Activated T-helper 1 cell treated with anti-CD3 and anti-CD28 coated beads, Interleukin-12 subunit alpha, Interleukin-12 subunit beta, Interleukin-2, Interleukin-4 antibody, amounts not matched to agents 30 ng/mL and 10 ng/mL and 1 ng/mL, durations not matched to agents 14 hours and 24 hours and 36 hours (primary cell): ENCODE measurements at regions of chr17 and their contacts with region 1.

Region 1: DNA sequence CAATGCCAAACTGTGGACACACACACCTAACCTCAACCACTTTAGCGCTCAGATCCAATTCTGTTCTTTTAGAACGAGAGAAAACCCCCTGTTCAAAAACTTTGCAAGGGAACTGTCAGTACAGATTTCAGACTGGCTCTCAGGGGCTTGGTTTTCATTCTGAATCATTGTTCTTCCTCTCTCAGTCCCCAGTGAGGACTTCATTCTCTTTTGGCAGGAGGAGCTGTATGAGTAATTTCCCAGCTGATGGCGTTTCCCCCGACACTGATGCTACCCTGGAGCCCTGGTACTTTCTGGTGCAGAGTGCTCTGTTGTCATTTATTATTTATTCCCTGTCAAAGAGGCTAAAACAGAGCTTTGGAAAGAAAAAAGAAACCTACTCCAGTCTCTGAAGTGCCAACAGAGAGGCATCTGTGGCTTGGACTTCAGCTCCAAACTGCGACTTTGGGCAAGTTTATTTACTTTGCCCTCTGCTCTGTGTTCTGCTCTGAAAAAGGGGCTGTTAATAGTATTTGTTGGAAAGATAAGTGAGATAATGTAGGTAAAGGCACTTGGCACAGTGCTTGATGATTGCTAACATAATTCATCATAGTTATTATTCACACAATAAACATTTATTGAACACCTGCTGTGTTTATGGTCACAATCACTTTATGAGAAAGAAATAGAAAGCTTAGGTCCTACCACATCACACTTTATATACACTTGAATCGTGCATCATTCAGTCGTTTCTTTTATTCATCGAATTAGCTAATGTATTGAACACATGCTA is 28.3 kb downstream of the ETV4 start:
- DNase-seq: no peak
- H3K4me3 Mint-ChIP-seq: no peak overlapping the region
- H3K27ac Mint-ChIP-seq: peak overlapping the region; percentile 45
- H3K4me1 Mint-ChIP-seq: peaks cover 14% of the 10 kb centered on the region
- H3K27me3 Mint-ChIP-seq: no peaks in the 10 kb centered on the region

Region 2: DNA sequence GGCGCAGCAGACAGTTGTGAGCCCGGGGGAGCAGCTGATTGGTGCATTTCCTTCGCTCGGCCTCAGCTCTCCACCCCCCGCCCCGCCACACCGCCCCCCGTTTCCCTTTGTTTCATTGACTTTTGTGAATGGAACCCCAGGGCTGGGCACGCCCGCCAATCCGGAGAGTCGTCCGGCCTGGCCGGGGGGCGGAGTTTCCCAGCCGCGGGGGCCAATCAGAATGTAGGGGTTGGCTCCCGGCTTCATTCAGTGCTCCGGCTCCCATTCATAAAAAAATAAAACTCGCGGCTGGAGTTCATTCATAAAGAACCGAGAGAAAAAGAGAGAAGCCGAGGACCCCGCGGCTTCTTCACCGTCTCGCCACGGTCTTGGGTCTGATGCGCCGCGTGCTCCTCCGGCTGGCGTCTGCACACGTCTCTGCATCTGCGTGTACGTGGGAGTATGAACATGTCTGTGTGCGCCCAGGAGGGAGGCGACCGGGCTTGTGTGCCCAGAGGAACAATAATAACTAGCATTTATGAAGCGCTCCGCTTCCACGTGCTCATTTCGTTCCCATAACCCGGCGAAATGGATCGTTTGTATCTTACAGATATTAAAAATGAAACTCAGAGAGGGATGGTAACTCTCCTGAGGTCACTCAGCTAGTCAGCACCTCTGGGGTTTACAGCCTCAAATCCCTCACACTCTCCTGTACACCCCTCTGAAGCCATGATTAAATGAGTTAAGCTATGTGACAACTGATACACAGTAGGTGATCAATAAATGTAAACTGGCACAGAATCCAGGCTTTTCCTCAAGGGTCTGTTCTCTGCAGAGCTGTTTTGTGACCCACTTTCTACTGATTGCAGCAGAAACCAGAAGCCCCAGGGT is 28.8 kb after region 1 on chr17 and contains the start of gene ETV4:
- intact Hi-C with region 1: loop called (anchors 2 kb)
- DNase-seq: peak; percentile 91
- H3K4me3 Mint-ChIP-seq: peak within 1 kb of the TSS; percentile 91
- H3K27ac Mint-ChIP-seq: peak within 1 kb of the TSS; percentile 83
- H3K4me1 Mint-ChIP-seq: peaks cover 24% of the 10 kb centered on the region
- H3K27me3 Mint-ChIP-seq: peaks cover 54% of the 10 kb centered on the region
- total RNA-seq, gene ETV4: 6.9 and 8.1 TPM in 2 replicates

Region 3: DNA sequence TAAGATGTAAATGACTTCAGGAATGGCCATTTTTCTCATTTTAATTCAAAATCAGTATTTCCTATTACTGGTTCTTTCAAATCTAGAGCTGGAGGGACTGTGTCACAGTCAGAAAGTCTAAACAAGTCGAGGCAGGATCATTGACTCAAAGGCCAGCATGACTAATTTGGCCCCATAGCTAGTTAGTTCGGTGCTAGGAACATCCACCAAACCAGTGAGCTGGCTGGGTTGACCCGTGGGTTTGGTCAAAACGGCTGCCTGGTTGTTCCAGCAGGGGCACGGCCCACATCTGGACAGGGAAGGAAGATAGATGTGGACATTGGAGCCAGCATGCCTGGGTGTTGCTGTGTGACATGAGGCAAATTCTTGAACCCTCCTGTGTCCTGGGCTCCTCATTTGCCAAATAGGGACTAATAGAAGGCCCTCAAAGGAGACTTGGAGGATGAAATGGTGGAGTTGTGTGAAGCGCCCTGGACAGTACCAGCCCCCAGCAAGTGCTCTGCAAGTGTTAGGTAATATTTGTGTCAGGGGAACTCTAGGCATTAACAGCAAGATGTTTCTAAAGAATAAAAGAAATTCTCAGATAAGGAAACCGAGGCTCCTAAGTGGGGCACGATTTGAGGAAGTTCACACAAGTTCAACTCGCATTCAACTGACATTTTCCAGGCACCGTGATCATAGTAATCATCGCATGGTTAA is 97.7 kb after region 1 on chr17:
- intact Hi-C with region 1: no loop called
- DNase-seq: no peak
- H3K4me3 Mint-ChIP-seq: no peak overlapping the region
- H3K27ac Mint-ChIP-seq: no peak overlapping the region
- H3K4me1 Mint-ChIP-seq: no peaks in the 10 kb centered on the region
- H3K27me3 Mint-ChIP-seq: peaks cover 4% of the 10 kb centered on the region